Gastrocnemius medialis (tissue), 4 donors: ENCODE measurements at regions of chr12 and their contacts with region 1.

Region 1: DNA sequence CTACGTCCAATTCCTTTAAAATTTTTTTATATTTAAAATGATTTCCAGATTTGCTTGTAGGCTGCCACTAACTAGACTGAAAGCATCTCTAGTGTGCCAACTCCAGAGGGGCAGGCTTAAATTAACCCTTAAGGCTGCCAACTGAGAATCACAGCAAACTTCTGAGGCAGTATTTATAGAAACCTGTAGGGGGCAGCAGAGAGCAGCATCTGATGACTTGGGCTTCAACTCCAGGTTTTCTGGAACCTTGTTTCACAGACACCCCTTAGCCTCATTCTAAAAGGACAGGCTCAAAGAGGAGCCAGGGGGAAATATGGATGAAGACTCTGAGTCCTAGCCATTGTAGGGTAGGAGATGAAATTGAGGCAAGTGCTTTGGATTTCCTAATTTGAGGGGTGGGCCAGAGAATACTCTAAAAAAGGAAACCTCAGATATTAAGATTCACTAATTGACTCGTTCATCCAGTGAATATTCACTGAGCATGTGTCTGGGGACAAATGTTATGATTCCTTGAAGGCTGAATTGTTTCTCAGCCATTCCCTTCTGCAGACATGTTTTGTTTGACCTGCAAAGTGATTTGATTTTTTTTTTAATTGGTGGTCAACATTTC is 63.3 kb upstream of the HSPB8 start:
- DNase-seq: peak in 1 of 2 donors; percentile 23
- ATAC-seq: peak; percentile 46 to 84
- H3K4me3 ChIP-seq: no peak overlapping the region
- H3K27ac ChIP-seq: no peak overlapping the region
- H3K4me1 ChIP-seq: peaks cover 7 to 15% of the 10 kb centered on the region in 2 donors
- H3K27me3 ChIP-seq: peaks cover 0 to 4% (median 3%) of the 10 kb centered on the region in 3 donors
- CTCF ChIP-seq: peak; percentile 82 to 96 (median 94)
- POLR2A ChIP-seq: no peak

Region 2: GRCh38 chr12:119159844-119160243 is 44.4 kb after region 1 on chr12:
- in situ Hi-C with region 1: no loop called
- intact Hi-C with region 1: no loop called
- DNase-seq: peak in 1 of 2 donors; percentile 83
- ATAC-seq: peak; percentile 13 to 25
- H3K4me3 ChIP-seq: no peak overlapping the region
- H3K27ac ChIP-seq: peak overlapping the region; percentile 93 to 99 (median 95)
- H3K4me1 ChIP-seq: peaks cover 42 to 43% of the 10 kb centered on the region in 2 donors
- H3K27me3 ChIP-seq: no peaks in the 10 kb centered on the region
- CTCF ChIP-seq: no peak
- POLR2A ChIP-seq: no peak

Region 3: DNA sequence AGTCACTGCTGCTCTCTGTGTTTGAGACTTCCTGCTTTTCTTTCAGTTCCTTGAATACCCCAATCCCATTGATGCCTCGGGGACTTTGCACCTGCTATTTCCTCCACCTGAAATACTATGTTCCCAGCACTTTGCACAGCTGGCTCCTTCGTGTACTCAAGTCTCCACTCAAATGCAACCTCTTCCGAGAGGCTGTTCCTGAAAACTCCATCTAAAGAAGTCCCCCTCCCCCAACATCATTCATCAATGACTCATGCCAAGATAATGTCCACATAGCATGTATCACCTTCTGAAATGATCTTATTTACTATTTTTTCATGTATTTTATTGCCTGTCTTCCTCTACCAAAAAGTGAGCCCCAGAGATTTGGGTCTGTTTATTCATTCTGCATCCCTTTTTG is 111.9 kb after region 1 on chr12:
- in situ Hi-C with region 1: no loop called
- intact Hi-C with region 1: loop called (anchors 2 kb)
- DNase-seq: no peak
- ATAC-seq: no peak
- H3K4me3 ChIP-seq: no peak overlapping the region
- H3K27ac ChIP-seq: no peak overlapping the region
- H3K4me1 ChIP-seq: peaks cover 0 to 6% of the 10 kb centered on the region in 2 donors
- H3K27me3 ChIP-seq: no peaks in the 10 kb centered on the region
- CTCF ChIP-seq: no peak
- POLR2A ChIP-seq: no peak

Region 4: DNA sequence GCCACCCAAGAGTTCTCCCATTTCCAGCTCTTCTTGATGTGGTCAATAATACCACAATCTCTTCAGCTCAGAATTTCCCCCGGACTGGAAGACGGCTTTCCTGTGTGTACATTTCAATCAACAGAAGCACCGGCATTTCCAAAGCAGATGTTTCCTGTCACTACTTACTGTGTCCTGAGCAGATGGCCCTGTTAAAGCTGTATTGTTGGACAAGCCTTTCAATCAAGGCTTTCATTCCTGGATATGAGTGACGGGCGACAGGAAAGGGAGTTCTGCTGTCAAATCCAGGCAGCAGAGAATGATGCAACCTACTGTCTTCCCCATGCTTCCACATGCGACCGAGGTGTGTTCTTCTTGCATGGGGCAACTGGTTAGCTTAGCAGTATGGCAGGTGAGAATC is 142.7 kb after region 1 on chr12:
- in situ Hi-C with region 1: loop called in 1 of 4 experiments (anchors 25 kb)
- intact Hi-C with region 1: no loop called
- DNase-seq: no peak
- ATAC-seq: no peak
- H3K4me3 ChIP-seq: no peak overlapping the region
- H3K27ac ChIP-seq: no peak overlapping the region
- H3K4me1 ChIP-seq: no peaks in the 10 kb centered on the region
- H3K27me3 ChIP-seq: no peaks in the 10 kb centered on the region
- CTCF ChIP-seq: no peak
- POLR2A ChIP-seq: no peak

Region 5: DNA sequence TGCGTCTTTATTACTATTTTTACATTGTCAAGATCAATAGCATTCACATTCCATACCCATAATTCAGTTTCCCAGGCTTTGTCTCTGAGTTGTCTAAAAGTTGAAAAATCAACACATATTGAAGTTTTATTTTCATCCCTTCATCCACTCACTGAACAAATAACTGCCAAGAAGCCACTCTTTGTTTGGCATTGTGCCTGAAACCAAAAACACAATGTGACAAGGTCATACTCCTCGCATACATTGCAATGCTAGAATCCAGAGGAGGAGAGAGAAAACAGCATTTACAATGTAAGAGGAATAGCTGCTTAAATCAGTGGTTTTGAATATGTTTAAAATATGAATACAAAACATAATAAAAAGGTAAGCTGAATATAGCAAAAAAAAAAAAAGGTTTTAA is 290.9 kb after region 1 on chr12:
- in situ Hi-C with region 1: loop called in 3 of 4 experiments (anchors 10 kb)
- intact Hi-C with region 1: no loop called
- DNase-seq: no peak
- ATAC-seq: no peak
- H3K4me3 ChIP-seq: no peak overlapping the region
- H3K27ac ChIP-seq: no peak overlapping the region
- H3K4me1 ChIP-seq: no peaks in the 10 kb centered on the region
- H3K27me3 ChIP-seq: peaks cover 0 to 8% (median 0%) of the 10 kb centered on the region in 3 donors
- CTCF ChIP-seq: no peak
- POLR2A ChIP-seq: no peak

Region 6: GRCh38 chr12:119544765-119545625 is 429.6 kb after region 1 on chr12:
- in situ Hi-C with region 1: no loop called
- intact Hi-C with region 1: loop called (anchors 10 kb)
- DNase-seq: peak; percentile 38 to 47
- ATAC-seq: peak; percentile 54 to 81
- H3K4me3 ChIP-seq: no peak overlapping the region
- H3K27ac ChIP-seq: no peak overlapping the region
- H3K4me1 ChIP-seq: no peaks in the 10 kb centered on the region
- H3K27me3 ChIP-seq: no peaks in the 10 kb centered on the region
- CTCF ChIP-seq: peak; percentile 69 to 87 (median 81)
- POLR2A ChIP-seq: no peak